Left colon (tissue), 2 donors: ENCODE measurements at regions of chr7 and their contacts with region 1.

Region 1: GRCh38 chr7:26853788-26854393 is 10.5 kb downstream of the SKAP2 start:
- DNase-seq: no peak
- ATAC-seq: peak; percentile 48

Region 2: DNA sequence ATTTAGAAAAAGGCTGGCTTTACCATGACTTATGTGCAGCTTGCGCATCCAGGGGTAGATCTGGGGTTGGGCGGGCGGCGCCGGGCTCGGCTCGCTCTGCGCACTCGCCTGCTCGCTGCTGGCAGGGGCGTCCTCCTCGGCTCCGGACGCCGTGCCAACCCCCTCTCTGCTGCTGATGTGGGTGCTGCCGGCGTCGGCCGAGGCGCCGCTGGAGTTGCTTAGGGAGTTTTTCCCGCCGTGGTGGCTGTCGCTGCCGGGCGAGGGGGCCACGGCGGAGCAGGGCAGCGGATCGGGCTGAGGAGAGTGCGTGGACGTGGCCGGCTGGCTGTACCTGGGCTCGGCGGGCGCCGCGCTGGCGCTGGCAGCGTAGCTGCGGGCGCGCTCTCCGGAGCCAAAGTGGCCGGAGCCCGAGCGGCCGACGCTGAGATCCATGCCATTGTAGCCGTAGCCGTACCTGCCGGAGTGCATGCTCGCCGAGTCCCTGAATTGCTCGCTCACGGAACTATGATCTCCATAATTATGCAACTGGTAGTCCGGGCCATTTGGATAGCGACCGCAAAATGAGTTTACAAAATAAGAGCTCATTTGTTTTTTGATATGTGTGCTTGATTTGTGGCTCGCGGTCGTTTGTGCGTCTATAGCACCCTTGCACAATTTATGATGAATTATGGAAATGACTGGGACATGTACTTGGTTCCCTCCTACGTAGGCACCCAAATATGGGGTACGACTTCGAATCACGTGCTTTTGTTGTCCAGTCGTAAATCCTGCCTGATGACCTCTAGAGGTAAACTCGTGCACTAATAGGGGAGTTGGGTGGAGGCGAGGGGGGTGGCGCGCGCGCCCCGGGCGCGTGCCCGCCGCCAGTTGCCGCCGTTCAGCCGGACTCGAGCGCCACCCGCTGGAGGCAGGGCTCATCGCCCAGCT is 289.4 kb after region 1 on chr7 and contains the start of gene HOXA5:
- intact Hi-C with region 1: loop called in 1 of 2 experiments (anchors 5 kb)
- DNase-seq: peak in 1 of 2 donors; percentile 85
- ATAC-seq: peak; percentile 40
- total RNA-seq, gene HOXA5: 13.0 to 16.2 TPM